BJ (cell line): ENCODE measurements at regions of chr16 and their contacts with region 1.

Region 1: DNA sequence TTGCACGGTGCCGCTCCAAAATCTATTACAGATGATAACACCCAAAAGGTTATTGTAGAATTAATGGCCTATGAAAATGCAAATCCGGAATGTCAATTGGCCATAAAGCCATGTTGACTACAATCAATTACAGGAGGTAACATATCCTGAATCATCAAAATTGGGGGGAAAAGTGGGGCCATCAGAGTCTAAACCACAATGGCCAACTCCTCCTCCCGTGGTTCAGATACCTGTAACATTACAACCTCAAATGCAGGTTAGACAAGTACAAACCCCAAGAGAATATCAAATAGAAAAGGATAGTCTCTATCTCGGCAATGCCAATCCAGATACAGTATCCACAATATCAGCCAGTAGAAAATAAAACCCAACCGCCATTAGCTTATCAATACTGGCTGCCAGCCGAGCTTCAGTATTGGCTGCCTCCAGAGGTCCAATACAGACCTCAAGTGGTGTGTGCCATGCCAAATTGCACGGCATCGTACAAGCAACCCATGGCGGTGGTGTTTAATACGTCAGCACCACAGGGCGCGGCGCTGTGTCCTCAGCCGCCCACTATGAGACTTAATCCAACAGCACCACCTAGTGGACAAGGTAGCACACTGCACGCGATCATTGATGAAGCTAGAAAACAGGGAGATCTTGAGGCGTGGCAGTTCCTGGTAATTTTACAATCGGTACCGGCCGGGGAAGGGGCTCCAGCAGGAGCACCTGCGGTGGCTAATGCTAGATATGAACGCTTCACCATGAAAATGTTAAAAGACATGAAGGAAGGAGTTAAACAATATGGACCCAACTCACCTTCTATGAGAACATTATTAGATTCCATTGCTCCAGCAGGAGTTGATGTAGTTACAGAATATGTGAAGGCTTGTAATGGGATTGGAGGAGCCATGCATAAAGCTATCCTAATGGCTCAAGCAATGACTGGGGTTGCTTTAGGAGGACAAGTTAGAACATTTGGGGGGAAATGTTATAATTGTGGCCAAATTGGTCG is 15.2 kb downstream of the FLYWCH1 start:
- DNase-seq: no peak
- H3K4me3 ChIP-seq: no peak overlapping the region
- H3K27me3 ChIP-seq: no peaks in the 10 kb centered on the region
- CTCF ChIP-seq: peak; percentile 93

Region 2: DNA sequence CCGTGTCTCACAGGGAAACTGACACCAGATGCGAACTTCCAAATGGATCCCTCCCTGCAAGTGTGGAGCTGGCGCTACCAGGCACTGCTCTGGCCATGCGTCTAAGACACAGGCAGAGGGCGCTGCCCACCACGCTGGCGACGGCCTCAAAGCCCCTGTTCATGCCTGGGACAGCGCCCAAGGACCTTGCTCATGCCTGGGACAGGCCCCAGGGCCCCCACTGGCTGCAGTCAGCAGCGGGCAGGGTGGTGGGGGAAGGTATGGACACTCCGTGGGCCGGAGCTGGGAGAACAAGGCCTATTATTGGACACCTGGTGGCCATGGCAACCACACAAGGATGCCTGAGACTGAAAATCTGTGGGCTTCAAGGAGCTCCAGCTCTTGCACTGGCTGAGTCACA is 88.0 kb before region 1 on chr16:
- CTCF ChIA-PET with region 1: interaction called, 22 read pairs
- POLR2A ChIA-PET with region 1: no interaction called
- DNase-seq: no peak
- H3K4me3 ChIP-seq: no peak overlapping the region
- H3K27me3 ChIP-seq: peaks cover 4% of the 10 kb centered on the region
- CTCF ChIP-seq: peak; percentile 97

Region 3: DNA sequence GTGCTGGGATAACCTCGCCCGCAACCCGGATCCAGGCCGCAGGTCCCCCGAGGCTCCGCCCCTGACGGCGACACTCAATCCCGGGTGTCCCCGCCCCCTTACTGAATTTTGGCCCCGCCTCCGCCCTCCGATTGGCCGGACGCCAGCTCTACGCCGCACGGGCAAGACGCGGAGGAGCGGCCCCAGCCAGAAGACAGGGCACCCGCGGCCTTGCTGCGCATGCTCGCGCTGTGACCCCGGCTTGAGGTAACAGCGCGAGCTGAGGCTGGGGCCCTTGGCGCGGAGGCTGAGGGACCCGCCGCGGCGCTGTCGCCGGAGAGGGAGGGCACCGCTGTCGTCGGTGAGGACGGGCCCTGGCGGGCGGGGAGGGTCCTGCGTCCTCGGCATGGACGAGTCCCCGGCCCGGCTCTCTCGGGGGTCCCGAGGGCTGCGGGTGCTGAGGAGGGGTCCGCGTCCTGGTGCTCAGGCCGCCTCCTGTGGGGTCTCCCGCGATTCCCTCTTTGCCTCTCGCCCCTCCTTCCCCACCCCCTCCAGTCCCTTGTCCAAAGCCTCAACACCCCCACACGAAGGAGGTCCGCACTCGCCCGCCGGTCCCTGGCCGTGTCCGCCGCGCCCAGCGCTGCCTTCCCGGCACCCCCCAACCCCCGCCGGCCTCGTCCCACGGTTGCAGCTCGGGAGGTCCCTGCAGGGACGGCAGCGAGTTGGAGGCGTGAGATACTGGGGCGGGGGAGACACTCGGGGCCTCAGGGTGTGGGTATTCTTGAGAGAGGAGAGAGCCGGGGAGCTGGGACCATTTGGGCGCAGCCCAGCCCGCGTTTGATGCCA is 43.7 kb before region 1 on chr16 and contains the start of gene FLYWCH2:
- CTCF ChIA-PET with region 1: interaction called, 24 read pairs
- POLR2A ChIA-PET with region 1: no interaction called
- DNase-seq: peak; percentile 76
- H3K4me3 ChIP-seq: peak within 1 kb of the TSS; percentile 99
- H3K27me3 ChIP-seq: no peaks in the 10 kb centered on the region; the same call in 1 of the 2 replicates
- CTCF ChIP-seq: no peak
- polyA plus RNA-seq, gene FLYWCH2: 25.6 and 39.9 TPM in 2 replicates

Region 4: DNA sequence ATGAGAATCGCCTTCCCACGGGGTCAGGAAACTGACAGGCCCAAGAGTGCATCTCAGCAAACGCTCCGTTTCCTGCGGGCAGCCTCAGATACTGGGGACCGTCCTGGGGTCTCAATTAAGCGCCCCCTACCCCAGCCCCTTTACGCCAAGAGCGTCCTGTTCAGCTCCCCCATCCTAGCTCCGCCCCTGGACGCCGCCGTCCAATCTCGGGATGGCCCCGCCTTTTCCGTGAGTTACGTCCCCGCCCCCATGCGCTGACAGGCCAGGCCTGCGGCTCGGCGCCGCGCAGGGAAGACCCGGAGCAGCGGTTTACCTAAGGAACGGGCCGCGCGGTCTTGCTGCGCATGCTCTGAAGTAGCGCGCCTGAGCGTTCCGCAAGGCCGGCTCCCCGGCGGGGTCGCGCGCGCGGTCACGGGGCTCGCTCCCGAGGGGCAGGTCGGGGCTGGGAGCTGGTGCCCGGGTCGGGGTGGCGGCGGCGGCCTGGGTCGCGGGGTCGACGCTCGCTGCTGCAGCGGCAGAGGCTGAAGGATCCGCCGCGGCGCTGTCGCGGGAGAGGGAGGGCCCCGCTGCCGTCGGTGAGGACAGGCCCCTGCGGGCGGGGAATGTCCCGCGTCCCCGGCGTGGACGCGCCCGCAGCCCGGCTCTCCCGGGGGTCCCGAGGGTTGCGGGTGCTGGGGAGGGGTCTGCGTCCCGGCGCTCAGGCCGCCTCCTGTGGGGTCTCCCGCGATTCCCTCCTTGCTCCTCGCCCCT is 15.2 kb before region 1 on chr16 and contains the start of gene FLYWCH1:
- CTCF ChIA-PET with region 1: interaction called, 24 read pairs
- POLR2A ChIA-PET with region 1: no interaction called
- DNase-seq: peak; percentile 84
- H3K4me3 ChIP-seq: peak within 1 kb of the TSS; percentile 89
- H3K27me3 ChIP-seq: no peaks in the 10 kb centered on the region
- CTCF ChIP-seq: no peak
- polyA plus RNA-seq, gene FLYWCH1: 16.2 and 25.4 TPM in 2 replicates

Region 5: GRCh38 chr16:2946649-2947048 is 19.7 kb after region 1 on chr16:
- CTCF ChIA-PET with region 1: interaction called, 12 read pairs
- POLR2A ChIA-PET with region 1: no interaction called
- DNase-seq: no peak
- H3K4me3 ChIP-seq: no peak overlapping the region
- H3K27me3 ChIP-seq: no peaks in the 10 kb centered on the region
- CTCF ChIP-seq: no peak